IMR-90 (cell line): ENCODE measurements at regions of chr17 and their contacts with region 1.

Region 1: GRCh38 chr17:35879773-35880654 is at the start of gene CCL5:
- DNase-seq: peak; percentile 13
- ATAC-seq: no peak
- H3K4me3 ChIP-seq: no peak within 1 kb of the TSS
- H3K27ac ChIP-seq: no peak within 1 kb of the TSS
- H3K4me1 ChIP-seq: no peaks in the 10 kb centered on the region
- H3K27me3 ChIP-seq: peaks cover 3% of the 10 kb centered on the region; the same call in 1 of the 2 replicates
- CTCF ChIP-seq: no peak
- POLR2A ChIP-seq: no peak
- RAD21 ChIP-seq: no peak
- total RNA-seq, gene CCL5: not detected in 2 replicates

Region 2: DNA sequence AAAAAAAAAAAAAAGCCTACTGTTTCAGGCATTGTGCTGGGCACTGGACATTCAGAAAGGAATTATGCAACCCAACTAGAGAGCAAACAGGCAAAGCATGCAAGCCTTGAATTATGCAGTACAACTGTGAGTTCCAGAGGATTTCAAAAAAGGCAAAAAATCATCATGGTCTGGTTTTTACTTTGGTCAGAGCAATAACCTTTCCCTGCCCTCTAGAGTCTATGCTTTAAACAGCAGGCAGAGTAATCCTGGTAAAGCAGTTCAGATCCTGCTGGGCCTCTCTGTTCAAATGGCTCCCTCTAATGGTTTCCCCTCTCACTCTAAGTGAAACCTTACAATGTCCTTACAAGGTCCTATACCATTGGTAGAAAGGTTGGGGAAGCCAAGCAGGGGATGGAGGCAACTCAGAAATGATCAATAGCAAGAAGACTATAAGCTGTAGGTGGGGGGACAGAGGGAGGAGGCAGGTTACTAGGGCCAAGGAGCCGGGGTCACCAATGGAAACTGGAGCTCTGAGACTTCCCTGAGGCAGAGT is 75.3 kb before region 1 on chr17:
- CTCF ChIA-PET with region 1: no interaction called
- POLR2A ChIA-PET with region 1: no interaction called
- dilution Hi-C with region 1: no loop called
- in situ Hi-C with region 1: no loop called
- intact Hi-C with region 1: no loop called
- DNase-seq: peak; percentile 92
- ATAC-seq: peak; percentile 60
- H3K4me3 ChIP-seq: no peak overlapping the region
- H3K27ac ChIP-seq: no peak overlapping the region
- H3K4me1 ChIP-seq: peaks cover 10% of the 10 kb centered on the region
- H3K27me3 ChIP-seq: peaks cover 5% of the 10 kb centered on the region
- CTCF ChIP-seq: peak; percentile 100; the same call in 1 of the 2 replicates
- POLR2A ChIP-seq: 0 out of 2 replicates have a peak, but pooled peaks have one; percentile 44
- RAD21 ChIP-seq: peak; percentile 99

Region 3: GRCh38 chr17:35918665-35919064 is 38.7 kb after region 1 on chr17:
- CTCF ChIA-PET with region 1: no interaction called
- POLR2A ChIA-PET with region 1: interaction called, 11 read pairs
- dilution Hi-C with region 1: no loop called
- in situ Hi-C with region 1: no loop called
- intact Hi-C with region 1: no loop called
- DNase-seq: no peak
- ATAC-seq: no peak
- H3K4me3 ChIP-seq: no peak overlapping the region
- H3K27ac ChIP-seq: no peak overlapping the region
- H3K4me1 ChIP-seq: no peaks in the 10 kb centered on the region
- H3K27me3 ChIP-seq: no peaks in the 10 kb centered on the region
- CTCF ChIP-seq: no peak
- POLR2A ChIP-seq: no peak
- RAD21 ChIP-seq: no peak